ENCODE measurements at regions of chr4 and their contacts with region 1.

Region 1: DNA sequence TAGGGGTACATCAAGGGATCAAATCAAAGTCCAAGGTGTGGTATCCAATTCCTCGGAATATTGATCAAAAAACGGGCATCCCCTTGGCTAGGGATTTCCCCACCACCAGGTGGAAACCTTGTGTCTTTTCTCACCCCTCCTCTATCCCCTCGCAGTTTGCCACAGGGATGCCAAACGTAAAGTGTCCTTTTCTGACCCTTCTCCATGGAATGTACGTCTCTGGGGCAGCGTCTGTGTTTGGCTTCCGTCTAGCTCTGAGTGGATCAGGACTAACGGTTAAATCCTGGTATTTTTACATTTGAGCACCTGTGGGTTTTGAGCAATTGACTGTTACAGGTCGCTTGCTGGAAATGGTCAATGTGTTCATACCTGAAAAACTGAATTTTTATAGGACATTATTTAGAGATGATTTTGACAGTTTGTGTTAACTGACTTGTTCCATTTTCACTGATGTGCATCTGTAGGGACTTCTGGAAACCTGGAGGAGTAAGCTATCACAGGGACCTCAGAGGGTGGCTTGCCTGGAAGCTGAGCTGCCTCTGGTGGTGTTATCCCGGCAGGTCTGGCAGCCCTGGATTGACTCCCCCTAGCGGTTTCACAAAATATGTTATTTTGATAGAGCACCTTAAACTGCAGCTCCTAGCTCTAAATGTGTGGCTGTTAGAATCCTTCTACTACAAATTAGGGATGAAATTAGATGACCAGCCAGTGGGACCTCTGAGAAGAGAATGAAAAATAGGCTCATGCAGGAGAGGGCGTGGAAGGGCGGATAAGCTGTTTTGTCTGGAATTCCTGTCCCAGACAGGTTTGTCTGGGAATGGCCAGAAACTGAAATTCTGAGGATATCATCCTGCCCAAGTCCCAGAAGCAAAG is 8.8 kb upstream of the MGST2 start:
- DNase-seq: peak; percentile 70
- H3K27ac ChIP-seq: peak overlapping the region; percentile 96
- CTCF ChIP-seq: peak; percentile 78

Region 2: GRCh38 chr4:139603576-139604387 is 53.1 kb before region 1 on chr4:
- CTCF ChIA-PET with region 1: interaction called, 54 read pairs
- POLR2A ChIA-PET with region 1: no interaction called
- DNase-seq: peak; percentile 44
- H3K27ac ChIP-seq: no peak overlapping the region
- CTCF ChIP-seq: peak; percentile 74

Region 3: DNA sequence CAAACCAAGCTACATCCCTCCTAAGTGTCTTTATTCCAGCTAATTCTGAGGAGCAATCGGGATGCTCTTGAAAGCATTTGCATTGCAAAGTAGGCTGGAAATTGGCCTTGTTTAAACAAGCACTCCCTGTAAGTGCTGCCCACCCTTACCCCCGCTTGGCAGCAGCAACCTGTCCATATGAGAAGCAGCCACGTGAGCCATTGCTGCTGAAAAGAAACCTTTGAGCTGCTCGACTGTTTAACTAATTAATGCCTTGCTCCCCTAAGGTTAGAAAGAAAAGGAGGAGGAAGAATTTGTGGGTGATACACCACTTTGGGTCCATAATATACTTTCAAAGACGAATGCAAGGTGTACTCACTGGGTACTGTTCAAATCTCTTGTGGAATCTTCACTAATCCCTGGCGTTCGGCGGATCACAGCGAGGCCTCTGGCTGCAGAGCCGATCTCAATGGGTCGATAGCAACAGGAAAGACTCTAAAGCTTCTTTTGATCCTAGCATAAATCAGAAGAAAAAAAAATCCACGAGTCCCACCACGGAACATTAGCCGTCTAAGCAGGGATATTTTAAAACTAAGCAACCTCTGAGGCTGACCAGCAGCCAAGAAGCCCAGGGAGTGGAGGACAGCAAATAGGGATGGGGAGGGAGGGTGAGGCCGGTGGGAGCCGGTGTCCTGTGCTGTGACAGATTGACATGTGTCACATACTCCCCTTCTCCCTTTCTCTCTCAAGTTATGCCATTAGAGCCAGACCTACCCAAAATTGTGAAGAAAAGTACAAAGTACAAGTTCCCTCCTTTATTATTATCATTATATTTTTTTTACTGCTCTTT is 28.5 kb before region 1 on chr4:
- CTCF ChIA-PET with region 1: interaction called, 10 read pairs
- POLR2A ChIA-PET with region 1: no interaction called
- DNase-seq: no peak
- H3K27ac ChIP-seq: no peak overlapping the region
- CTCF ChIP-seq: no peak

Region 4: GRCh38 chr4:139700568-139700967 is 43.7 kb after region 1 on chr4:
- CTCF ChIA-PET with region 1: interaction called, 11 read pairs
- POLR2A ChIA-PET with region 1: no interaction called
- DNase-seq: no peak
- H3K27ac ChIP-seq: no peak overlapping the region
- CTCF ChIP-seq: no peak

Measured in RWPE1 (cell line).